Posterior cingulate gyrus (tissue), 11 donors: ENCODE measurements at regions of chr5 and their contacts with region 1.

Region 1: DNA sequence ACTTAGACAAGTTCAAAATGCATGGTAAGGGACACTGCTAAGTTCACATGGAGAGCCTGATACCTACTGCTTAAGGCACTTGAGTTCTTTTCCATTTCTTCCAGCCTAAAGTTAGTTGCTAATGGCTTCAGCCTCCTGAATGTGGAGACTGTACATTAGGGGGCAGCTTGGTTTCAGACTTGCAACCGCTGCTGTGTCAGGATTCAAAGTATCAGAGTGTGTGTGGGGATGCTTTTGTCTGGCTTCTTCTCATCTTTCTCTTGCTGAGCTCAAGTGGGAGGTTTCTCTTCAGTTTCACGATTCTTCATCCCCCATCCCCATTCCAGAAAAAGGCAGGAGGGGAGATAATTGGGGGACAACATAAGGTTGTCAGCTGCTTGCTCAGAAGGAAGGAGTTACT is 49.4 kb downstream of the ATP10B start:
- DNase-seq: peak in 5 of 10 donors; percentile 32 to 87 (median 38)

Region 2: DNA sequence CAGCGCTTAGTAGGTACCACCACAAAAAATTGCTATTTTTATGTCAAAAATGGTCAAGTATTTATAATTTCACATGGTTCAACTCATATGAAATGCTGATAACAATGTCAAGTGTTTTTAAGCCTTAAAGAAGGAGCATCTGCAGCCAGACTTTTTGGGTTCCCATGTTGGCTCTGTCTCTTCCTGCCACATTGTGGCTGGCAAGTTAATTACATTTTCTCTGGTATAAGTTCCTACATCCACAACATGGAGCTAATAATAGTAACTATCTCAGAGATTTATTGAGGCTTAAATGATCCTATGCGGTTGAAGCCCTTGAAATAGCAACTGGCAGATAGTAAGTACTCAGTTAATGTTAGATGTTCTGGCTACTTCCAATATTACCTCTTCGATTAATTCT is 44.0 kb after region 1 on chr5:
- intact Hi-C with region 1: loop called (anchors 5 kb)
- DNase-seq: no peak